Naive thymus-derived CD4-positive, alpha-beta T cell (primary cell): ENCODE measurements at regions of chr9 and their contacts with region 1.

Region 1: DNA sequence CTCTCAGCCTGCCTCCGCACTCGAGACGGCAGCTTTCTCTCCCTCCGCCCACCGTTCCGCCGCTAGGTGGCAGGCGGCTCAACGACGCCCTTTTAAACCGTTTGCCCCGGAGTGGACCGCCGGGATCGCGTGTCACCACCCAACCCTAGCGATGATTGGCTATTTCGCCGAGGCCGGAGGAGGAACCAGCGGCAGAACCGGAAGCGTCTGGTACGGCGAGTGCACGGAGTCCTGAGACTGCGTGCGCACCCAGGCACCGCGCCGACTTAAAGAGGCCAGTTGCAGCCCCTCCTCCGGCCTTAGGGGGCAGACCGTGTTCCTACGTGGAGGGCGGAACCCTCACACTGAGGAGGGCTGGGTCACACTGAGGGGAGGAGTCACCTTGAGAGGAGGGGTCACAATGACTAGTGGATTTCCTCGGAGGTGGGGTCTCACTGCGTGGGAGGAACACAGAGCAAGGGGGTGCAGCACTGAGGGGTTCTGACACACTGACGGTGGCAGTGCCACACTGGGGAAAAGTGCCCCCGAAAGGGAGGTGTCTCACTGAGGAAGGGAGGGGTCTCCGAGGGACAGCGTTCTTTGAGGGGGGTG is 980 bp upstream of the TESK1 start:
- DNase-seq: peak; percentile 94 to 99 (median 99)
- ATAC-seq: peak; percentile 95
- H3K4me3 ChIP-seq: peak overlapping the region; percentile 65
- H3K4me3 Mint-ChIP-seq: peak overlapping the region; percentile 92 to 100 (median 98)
- H3K27ac ChIP-seq: peak overlapping the region; percentile 84
- H3K27ac Mint-ChIP-seq: peak overlapping the region; percentile 94 to 99 (median 98)
- H3K4me1 ChIP-seq: peaks cover 22 to 24% of the 10 kb centered on the region in 2 donors
- H3K4me1 Mint-ChIP-seq: peaks cover 21 to 42% (median 35%) of the 10 kb centered on the region in 7 donors
- H3K27me3 ChIP-seq: no peaks in the 10 kb centered on the region
- H3K27me3 Mint-ChIP-seq: no peaks in the 10 kb centered on the region

Region 2: GRCh38 chr9:34637356-34638137 is 966.5 kb before region 1 on chr9 and contains the start of gene SIGMAR1:
- CTCF ChIA-PET with region 1: no interaction called
- POLR2A ChIA-PET with region 1: no interaction called
- intact Hi-C with region 1: loop called in 1 of 2 experiments (anchors 10 kb)
- DNase-seq: peak; percentile 88 to 97 (median 95)
- ATAC-seq: peak; percentile 97
- H3K4me3 ChIP-seq: peak within 1 kb of the TSS; percentile 94
- H3K4me3 Mint-ChIP-seq: peak within 1 kb of the TSS; percentile 88 to 93 (median 90)
- H3K27ac ChIP-seq: peak within 1 kb of the TSS; percentile 70
- H3K27ac Mint-ChIP-seq: peak within 1 kb of the TSS; percentile 88 to 98 (median 95)
- H3K4me1 ChIP-seq: peaks cover 21 to 22% of the 10 kb centered on the region in 2 donors
- H3K4me1 Mint-ChIP-seq: peaks cover 26 to 45% (median 37%) of the 10 kb centered on the region in 7 donors
- H3K27me3 ChIP-seq: no peaks in the 10 kb centered on the region
- H3K27me3 Mint-ChIP-seq: no peaks in the 10 kb centered on the region
- total RNA-seq, gene SIGMAR1: 20.7 to 63.8 (median 46.0) TPM

Region 3: GRCh38 chr9:35102926-35103659 is 501.0 kb before region 1 on chr9 and contains the start of gene STOML2:
- CTCF ChIA-PET with region 1: no interaction called
- POLR2A ChIA-PET with region 1: interaction called, 3 read pairs
- intact Hi-C with region 1: loop called in 1 of 2 experiments (anchors 2 kb)
- DNase-seq: peak; percentile 72 to 95 (median 91)
- ATAC-seq: peak; percentile 98
- H3K4me3 ChIP-seq: peak within 1 kb of the TSS; percentile 92
- H3K4me3 Mint-ChIP-seq: peak within 1 kb of the TSS; percentile 88 to 98 (median 92)
- H3K27ac ChIP-seq: peak within 1 kb of the TSS; percentile 81
- H3K27ac Mint-ChIP-seq: peak within 1 kb of the TSS; percentile 92 to 99 (median 96)
- H3K4me1 ChIP-seq: peaks cover 12 to 18% of the 10 kb centered on the region in 2 donors
- H3K4me1 Mint-ChIP-seq: peaks cover 18 to 36% (median 33%) of the 10 kb centered on the region in 7 donors
- H3K27me3 ChIP-seq: no peaks in the 10 kb centered on the region
- H3K27me3 Mint-ChIP-seq: no peaks in the 10 kb centered on the region
- total RNA-seq, gene STOML2: 34.7 to 126 (median 44.9) TPM

Region 4: GRCh38 chr9:35553670-35554543 is 50.2 kb before region 1 on chr9:
- CTCF ChIA-PET with region 1: no interaction called
- POLR2A ChIA-PET with region 1: no interaction called
- intact Hi-C with region 1: no loop called
- DNase-seq: peak in 7 of 9 donors; percentile 17 to 51 (median 41)
- ATAC-seq: peak; percentile 89
- H3K4me3 ChIP-seq: no peak overlapping the region
- H3K4me3 Mint-ChIP-seq: no peak overlapping the region
- H3K27ac ChIP-seq: no peak overlapping the region
- H3K27ac Mint-ChIP-seq: no peak overlapping the region
- H3K4me1 ChIP-seq: no peaks in the 10 kb centered on the region
- H3K4me1 Mint-ChIP-seq: peaks cover 0 to 3% (median 0%) of the 10 kb centered on the region in 7 donors
- H3K27me3 ChIP-seq: no peaks in the 10 kb centered on the region
- H3K27me3 Mint-ChIP-seq: peaks cover 0 to 2% (median 0%) of the 10 kb centered on the region in 5 donors

Region 5: GRCh38 chr9:35657546-35658136 is 53.6 kb after region 1 on chr9 and contains the start of gene RMRP:
- CTCF ChIA-PET with region 1: interaction called, 118 read pairs
- POLR2A ChIA-PET with region 1: interaction called, 4 read pairs
- intact Hi-C with region 1: loop called (anchors 1 kb)
- DNase-seq: peak; percentile 67 to 93 (median 91)
- ATAC-seq: peak; percentile 87
- H3K4me3 ChIP-seq: peak within 1 kb of the TSS; percentile 94
- H3K4me3 Mint-ChIP-seq: peak within 1 kb of the TSS; percentile 78 to 95 (median 90)
- H3K27ac ChIP-seq: peak within 1 kb of the TSS; percentile 99
- H3K27ac Mint-ChIP-seq: peak within 1 kb of the TSS; percentile 97 to 100 (median 100)
- H3K4me1 ChIP-seq: peaks cover 35 to 48% of the 10 kb centered on the region in 2 donors
- H3K4me1 Mint-ChIP-seq: peaks cover 42 to 78% (median 69%) of the 10 kb centered on the region in 7 donors
- H3K27me3 ChIP-seq: no peaks in the 10 kb centered on the region
- H3K27me3 Mint-ChIP-seq: peaks cover 0 to 6% (median 0%) of the 10 kb centered on the region in 5 donors
- total RNA-seq, gene RMRP: 5,750 to 11,273 (median 9,225) TPM

Region 6: DNA sequence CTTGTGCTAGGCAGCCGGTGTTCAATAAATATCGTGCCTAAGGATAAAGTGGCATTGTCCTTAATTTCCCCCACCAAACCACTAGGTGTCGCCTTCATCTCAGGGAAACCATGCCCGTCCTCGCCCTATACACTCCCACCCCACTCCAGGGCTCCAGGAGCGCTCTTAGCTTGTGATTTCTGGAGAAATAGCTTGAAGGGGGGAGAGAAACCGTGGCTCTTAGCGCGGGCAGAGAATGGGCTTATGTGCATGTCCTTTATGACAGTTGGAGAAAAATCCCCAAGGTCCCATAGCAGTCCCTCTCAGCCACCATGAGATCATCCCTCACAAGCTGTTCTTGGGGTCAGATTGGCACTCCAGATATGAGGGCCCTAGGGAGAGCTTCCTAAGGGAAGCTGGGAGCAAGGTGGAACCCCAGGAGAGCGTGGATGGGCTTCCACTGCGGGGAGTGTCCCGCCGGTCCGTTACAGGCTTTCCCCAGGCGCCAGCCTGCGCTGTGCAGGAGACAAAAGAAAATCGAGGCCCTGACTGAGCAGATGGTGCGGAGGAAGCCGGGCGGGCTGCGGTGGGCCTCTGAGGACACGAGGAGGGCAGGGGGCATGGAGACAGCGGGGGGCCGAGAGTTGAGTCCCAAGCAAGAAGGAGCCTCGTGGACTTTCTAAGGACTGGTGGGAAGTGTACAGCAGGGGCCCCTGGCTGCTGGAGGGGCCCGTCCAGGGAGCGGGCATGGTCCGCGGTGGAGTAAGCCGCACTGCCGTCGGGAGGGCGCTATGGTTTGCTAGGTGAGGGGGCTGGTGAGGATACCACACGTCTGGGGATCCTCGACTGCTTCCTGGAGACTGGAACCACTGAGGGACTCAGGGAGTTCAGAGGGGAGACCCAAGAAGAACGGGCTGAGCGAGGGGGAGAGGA is 186.6 kb after region 1 on chr9:
- CTCF ChIA-PET with region 1: no interaction called
- POLR2A ChIA-PET with region 1: no interaction called
- intact Hi-C with region 1: loop called in 1 of 2 experiments (anchors 1 kb)
- DNase-seq: peak; percentile 36 to 70 (median 62)
- ATAC-seq: peak; percentile 90
- H3K4me3 ChIP-seq: no peak overlapping the region
- H3K4me3 Mint-ChIP-seq: peak overlapping the region in 2 of 10 donors; percentile 31 to 58
- H3K27ac ChIP-seq: no peak overlapping the region
- H3K27ac Mint-ChIP-seq: no peak overlapping the region
- H3K4me1 ChIP-seq: no peaks in the 10 kb centered on the region
- H3K4me1 Mint-ChIP-seq: peaks cover 6 to 21% (median 10%) of the 10 kb centered on the region in 7 donors
- H3K27me3 ChIP-seq: no peaks in the 10 kb centered on the region
- H3K27me3 Mint-ChIP-seq: no peaks in the 10 kb centered on the region

Region 7: DNA sequence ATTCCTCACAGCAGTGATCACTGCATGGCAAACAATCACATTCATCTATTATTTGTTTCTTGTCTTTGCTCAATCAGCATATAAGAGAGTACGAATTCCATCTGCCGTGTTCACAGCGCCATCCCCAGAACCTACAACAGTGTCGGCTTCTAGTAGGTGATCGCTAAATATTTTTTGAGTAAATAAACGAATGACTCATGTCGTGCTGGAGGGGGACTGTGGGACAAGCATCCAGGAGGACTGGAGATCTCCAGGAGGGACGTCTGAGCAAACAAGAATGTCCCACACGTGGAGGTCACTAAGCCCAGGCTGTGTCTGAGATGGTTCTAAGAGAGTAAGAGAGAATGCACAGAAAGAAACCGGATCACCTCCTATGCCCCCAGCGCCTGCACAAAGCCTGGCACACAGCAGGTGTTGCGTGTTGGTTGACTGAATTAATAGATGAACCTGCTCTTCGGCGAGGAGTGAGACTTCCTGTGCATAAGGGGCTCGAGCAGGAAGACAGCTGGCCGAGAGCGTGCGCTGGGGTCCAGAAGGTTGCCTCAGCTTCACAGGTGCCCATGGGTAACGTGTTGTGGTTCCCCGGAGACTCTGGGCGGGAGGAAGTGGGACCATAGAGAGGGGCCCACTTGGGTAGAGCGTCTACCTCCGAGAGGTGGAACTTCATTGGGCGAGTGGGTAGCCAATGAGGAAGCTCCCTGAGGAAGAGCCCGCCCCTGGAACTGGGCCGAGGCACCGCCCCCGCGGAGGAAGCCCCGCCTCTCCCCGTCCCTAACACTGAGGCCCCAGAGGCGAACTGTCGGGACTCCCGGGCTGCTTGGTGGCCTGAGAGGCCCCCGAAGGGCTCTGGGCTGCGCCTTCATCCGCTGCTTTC is 1161.6 kb after region 1 on chr9:
- CTCF ChIA-PET with region 1: no interaction called
- POLR2A ChIA-PET with region 1: no interaction called
- intact Hi-C with region 1: loop called in 1 of 2 experiments (anchors 10 kb)
- DNase-seq: peak; percentile 81 to 96 (median 91)
- ATAC-seq: peak; percentile 100
- H3K4me3 ChIP-seq: peak overlapping the region; percentile 56
- H3K4me3 Mint-ChIP-seq: no peak overlapping the region
- H3K27ac ChIP-seq: peak overlapping the region; percentile 56
- H3K27ac Mint-ChIP-seq: no peak overlapping the region
- H3K4me1 ChIP-seq: no peaks in the 10 kb centered on the region
- H3K4me1 Mint-ChIP-seq: peaks cover 0 to 6% (median 2%) of the 10 kb centered on the region in 7 donors
- H3K27me3 ChIP-seq: no peaks in the 10 kb centered on the region
- H3K27me3 Mint-ChIP-seq: peaks cover 0 to 16% (median 11%) of the 10 kb centered on the region in 5 donors